ENCODE measurements at regions of chr17 and their contacts with region 1.

Region 1: GRCh38 chr17:42322382-42323267 is 34.3 kb downstream of the STAT5A start:
- DNase-seq: peak; percentile 76
- H3K4me3 ChIP-seq: no peak overlapping the region
- CTCF ChIP-seq: peak; percentile 100

Region 2: DNA sequence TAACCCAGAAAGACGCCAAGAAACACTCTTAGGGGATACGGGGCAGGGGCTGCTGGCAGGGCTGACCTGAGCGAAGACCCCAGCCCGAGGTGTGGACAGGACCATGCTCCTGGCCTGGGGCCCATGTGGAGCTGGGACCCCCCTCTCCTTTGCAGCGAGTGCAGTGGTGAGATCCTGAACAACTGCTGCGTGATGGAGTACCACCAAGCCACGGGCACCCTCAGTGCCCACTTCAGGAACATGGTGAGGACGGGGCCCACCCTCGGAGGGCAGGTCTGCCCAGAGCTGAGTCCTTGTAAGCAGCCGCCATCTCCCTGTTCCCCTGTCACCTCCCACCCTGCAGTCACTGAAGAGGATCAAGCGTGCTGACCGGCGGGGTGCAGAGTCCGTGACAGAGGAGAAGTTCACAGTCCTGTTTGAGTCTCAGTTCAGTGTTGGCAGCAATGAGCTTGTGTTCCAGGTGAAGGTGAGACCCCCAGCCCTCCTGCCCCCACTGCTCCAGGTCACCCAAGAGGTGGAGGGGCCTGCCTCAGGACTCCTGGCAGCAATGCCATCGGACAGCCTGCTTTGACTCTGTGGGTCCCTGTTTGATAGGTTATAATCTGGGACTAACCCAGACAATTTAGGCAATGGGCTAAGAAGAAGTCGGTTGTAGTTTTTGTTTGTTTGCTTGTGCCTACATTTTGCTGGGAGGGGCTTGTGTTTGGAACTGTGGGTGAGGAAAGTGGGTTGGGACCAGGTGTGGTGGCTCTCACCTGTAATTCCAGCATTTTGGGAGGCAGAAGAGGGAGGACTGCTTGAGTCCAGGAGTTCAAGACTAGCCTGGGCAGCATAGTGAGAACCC is 18.2 kb before region 1 on chr17:
- CTCF ChIA-PET with region 1: interaction called, 118 read pairs
- POLR2A ChIA-PET with region 1: no interaction called
- DNase-seq: no peak
- H3K4me3 ChIP-seq: no peak overlapping the region
- CTCF ChIP-seq: no peak

Region 3: GRCh38 chr17:42312285-42313130 is 10.1 kb before region 1 on chr17:
- CTCF ChIA-PET with region 1: interaction called, 118 read pairs
- POLR2A ChIA-PET with region 1: no interaction called
- DNase-seq: no peak
- H3K4me3 ChIP-seq: no peak overlapping the region
- CTCF ChIP-seq: peak; percentile 89

Region 4: GRCh38 chr17:42399948-42400843 is 77.6 kb after region 1 on chr17:
- CTCF ChIA-PET with region 1: interaction called, 54 read pairs
- POLR2A ChIA-PET with region 1: no interaction called
- DNase-seq: no peak
- H3K4me3 ChIP-seq: no peak overlapping the region
- CTCF ChIP-seq: no peak